Activated T-helper 1 cell treated with anti-CD3 and anti-CD28 coated beads, Interleukin-12 subunit alpha, Interleukin-12 subunit beta, Interleukin-2, Interleukin-4 antibody, amounts not matched to agents 30 ng/mL and 10 ng/mL and 1 ng/mL, durations not matched to agents 14 hours and 24 hours and 36 hours (primary cell): ENCODE measurements at regions of chr21 and their contacts with region 1.

Region 1: DNA sequence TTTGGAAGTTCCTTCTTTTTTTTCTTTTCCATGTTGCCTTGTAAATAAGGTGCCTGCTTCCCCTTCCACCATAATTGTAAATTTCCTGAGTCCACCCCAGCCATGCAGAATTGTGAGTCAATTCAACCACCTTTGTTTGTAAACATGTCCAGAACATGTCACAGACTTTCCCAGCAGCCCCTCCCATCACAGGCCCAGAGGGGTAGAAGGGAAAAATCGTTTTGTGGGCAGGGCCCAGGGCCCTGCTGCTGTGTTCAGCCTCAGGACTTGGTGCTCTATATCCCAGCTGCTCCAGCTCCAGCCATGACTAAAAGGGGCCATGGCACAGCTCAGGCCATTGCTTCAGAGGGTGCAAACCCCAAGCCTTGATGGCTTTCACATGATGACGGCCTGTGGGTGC is 384.6 kb upstream of the NCAM2 start:
- DNase-seq: no peak
- H3K4me3 Mint-ChIP-seq: no peak overlapping the region
- H3K27ac Mint-ChIP-seq: no peak overlapping the region
- H3K4me1 Mint-ChIP-seq: no peaks in the 10 kb centered on the region
- H3K27me3 Mint-ChIP-seq: no peaks in the 10 kb centered on the region

Region 2: GRCh38 chr21:20603236-20603635 is 10.4 kb before region 1 on chr21:
- intact Hi-C with region 1: no loop called
- DNase-seq: no peak
- H3K4me3 Mint-ChIP-seq: no peak overlapping the region
- H3K27ac Mint-ChIP-seq: no peak overlapping the region
- H3K4me1 Mint-ChIP-seq: no peaks in the 10 kb centered on the region
- H3K27me3 Mint-ChIP-seq: no peaks in the 10 kb centered on the region

Region 3: DNA sequence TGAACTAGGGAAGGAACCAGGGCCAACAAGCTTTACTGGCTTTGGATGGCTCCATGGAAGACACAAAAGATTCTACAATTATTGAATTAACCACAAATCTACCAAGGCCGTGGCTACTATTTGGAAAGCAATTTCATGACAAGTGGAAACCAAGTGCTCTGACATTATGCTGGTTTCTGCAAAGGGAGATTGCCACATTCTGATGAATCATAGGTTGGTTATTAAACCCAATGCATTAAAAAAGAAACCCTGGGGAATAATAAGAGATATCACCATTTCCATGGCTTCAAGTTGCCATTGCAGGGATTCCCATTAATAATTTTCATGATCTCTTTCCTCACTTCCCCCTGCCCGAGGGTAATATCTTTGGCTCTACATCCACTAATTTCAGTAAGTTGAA is 25.4 kb after region 1 on chr21:
- intact Hi-C with region 1: loop called (anchors 1 kb)
- DNase-seq: no peak
- H3K4me3 Mint-ChIP-seq: no peak overlapping the region
- H3K27ac Mint-ChIP-seq: no peak overlapping the region
- H3K4me1 Mint-ChIP-seq: no peaks in the 10 kb centered on the region
- H3K27me3 Mint-ChIP-seq: no peaks in the 10 kb centered on the region

Region 4: GRCh38 chr21:20652846-20653245 is 39.2 kb after region 1 on chr21:
- intact Hi-C with region 1: no loop called
- DNase-seq: no peak
- H3K4me3 Mint-ChIP-seq: no peak overlapping the region
- H3K27ac Mint-ChIP-seq: no peak overlapping the region
- H3K4me1 Mint-ChIP-seq: no peaks in the 10 kb centered on the region
- H3K27me3 Mint-ChIP-seq: no peaks in the 10 kb centered on the region